ENCODE measurements at regions of chr7 and their contacts with region 1.

Region 1: DNA sequence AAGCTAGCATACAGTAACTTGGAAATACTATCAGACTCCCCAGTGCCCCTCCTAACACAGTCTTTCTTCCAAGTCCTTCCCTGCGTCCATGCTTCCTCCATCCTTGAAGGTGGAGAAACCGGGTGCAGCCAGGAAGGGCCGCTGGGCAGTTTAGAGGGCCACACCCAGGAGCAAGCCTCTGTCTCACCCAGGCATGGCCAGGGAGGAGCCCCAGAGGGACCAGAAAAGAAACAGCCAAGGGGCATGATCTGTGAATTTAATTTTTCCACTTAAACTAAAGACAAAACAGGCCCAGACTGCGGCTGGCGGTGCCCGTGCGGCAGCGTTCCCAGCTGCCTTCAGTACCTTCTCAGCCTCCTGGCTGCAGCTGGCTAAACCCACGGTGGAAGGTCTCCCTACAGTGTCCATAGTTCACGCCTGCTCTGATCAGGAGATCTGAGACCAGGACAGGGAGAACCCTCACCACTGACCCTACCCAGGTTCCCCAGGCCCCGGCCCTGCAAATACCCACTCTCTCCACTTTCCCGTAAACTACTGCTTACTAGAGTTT is 12.9 kb downstream of the UNCX start:
- DNase-seq: no peak
- H3K4me3 Mint-ChIP-seq: no peak overlapping the region
- H3K27ac Mint-ChIP-seq: no peak overlapping the region
- H3K4me1 Mint-ChIP-seq: no peaks in the 10 kb centered on the region
- H3K27me3 Mint-ChIP-seq: peaks cover 62% of the 10 kb centered on the region

Region 2: DNA sequence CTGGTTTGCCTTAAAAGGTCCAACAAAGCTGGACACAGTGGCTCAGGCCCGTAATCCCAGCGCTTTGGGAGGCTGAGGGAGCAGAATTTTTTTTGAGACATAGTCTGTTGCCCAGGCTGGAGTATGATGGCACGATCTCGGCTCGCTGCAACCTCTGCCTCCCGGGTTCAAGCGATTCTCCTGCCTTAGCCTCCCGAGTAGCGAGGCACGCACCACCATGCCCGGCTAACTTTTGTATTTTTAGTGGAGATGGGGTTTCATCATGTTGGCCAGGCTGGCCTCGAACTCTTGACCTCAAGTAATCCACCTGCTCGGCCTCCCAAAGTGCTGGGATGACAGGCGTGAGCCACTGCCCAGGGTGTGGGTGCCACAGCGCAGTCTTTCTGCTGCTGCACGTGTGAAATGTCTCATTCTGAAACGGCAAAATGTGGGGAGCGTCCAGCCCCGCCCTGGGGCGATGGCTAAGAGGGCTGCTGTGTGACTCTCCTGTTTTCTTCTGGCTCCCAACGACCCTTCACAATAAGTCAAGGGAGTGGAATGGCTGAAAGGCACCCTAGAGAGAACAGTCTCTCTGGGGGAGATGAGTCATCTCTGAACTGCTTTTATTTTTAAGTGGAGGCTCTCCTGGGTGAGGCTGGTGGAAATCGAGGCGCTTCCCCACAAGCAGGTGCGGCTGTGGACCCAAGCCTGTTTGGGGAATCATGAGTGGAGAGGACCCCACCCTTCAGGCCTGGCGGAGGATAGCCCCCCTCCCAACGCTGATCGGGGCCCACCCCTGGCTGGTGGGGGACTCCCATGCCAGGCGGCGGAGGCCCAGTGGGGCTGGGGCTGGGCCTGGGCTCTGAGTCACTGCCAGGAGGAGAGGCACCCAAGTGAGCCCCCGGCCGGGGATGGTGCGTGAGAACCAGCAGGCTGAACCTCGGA is 309.2 kb before region 1 on chr7:
- CTCF ChIA-PET with region 1: no interaction called
- POLR2A ChIA-PET with region 1: no interaction called
- DNase-seq: no peak
- H3K4me3 Mint-ChIP-seq: no peak overlapping the region
- H3K27ac Mint-ChIP-seq: peak overlapping the region; percentile 46
- H3K4me1 Mint-ChIP-seq: peaks cover 13% of the 10 kb centered on the region
- H3K27me3 Mint-ChIP-seq: peaks cover 12% of the 10 kb centered on the region

Region 3: DNA sequence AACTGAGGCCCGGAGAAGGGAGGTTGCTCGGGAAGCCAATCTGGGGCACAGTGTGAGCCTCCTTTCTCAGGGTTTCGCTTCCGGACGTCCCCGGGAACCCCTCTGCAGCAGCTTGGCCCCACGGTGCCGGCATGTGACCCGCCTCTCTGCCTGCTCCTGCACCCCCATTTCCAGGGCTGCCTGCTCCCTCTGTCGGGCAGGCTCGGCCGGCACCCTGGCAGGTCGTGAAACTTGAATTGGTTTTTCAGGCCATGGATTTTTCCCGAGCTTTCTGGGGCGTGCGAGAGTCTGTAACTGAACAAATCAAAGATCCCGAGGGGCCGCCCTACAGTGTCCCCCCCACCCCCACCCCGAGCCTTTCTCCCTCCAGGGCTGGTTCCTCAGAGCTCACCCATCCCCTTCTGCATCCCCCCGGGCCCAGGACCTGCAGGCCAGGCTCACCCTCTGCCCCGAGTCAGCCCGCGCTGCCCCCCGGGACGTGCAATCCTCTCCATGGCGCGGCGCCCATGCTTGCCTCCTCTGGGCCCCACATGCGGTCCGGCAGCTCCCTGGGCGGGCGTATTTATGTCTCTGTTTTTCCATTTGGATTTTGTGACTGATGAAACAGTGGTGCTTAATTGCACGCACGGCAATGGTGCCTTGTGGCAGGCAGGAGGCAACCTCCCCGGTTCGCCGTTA is 45.2 kb after region 1 on chr7:
- CTCF ChIA-PET with region 1: no interaction called
- POLR2A ChIA-PET with region 1: no interaction called
- DNase-seq: no peak
- H3K4me3 Mint-ChIP-seq: no peak overlapping the region
- H3K27ac Mint-ChIP-seq: no peak overlapping the region
- H3K4me1 Mint-ChIP-seq: peaks cover 4% of the 10 kb centered on the region
- H3K27me3 Mint-ChIP-seq: peaks cover 20% of the 10 kb centered on the region

Region 4: DNA sequence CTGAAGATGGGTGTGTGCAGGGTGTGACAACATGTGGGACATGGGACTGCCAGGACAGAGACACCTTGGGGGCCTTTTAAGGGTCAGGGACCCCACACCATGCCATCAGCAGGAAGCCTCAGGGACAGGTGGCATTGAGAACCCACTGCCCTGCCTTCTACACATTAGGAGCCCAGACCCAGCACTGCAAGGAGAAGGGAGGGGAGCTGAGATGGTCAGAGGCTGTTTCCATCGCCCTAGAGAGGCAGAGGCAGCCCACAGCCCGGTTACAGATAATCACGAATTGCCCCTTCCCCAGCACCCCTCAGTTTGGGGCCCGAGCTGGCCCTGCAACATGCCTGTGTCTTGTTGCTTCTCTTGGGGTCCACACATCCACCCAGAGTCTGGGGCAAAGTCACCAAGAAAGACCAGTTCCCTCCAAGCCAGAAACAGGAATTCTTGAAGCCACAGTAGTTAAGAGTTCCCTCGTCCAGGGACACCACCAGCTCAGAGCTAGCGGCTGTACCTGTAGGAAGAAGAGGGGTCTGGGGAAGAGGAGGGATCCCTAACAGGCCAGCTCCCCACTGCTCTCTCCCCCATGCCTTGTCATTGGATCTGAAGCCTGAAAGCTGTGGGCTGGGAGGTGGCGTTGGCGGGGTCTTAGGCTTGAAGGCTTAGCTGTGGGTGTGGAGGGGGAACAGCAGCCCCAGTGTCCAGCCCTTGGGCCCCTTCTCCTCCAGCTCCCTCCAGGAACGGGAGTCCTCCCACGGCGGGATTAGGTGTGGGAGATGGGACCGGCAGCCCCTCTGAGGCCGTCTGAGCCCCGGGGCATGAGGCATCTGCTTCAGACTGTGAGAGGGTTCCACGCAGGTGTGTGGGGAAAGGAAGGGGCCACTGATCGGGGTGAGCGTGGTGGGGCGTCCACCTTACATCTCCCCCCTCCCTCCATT is 379.7 kb after region 1 on chr7:
- CTCF ChIA-PET with region 1: no interaction called
- POLR2A ChIA-PET with region 1: interaction called, 11 read pairs
- DNase-seq: no peak
- H3K4me3 Mint-ChIP-seq: no peak overlapping the region
- H3K27ac Mint-ChIP-seq: no peak overlapping the region
- H3K4me1 Mint-ChIP-seq: no peaks in the 10 kb centered on the region
- H3K27me3 Mint-ChIP-seq: no peaks in the 10 kb centered on the region

Measured in activated CD4-positive, alpha-beta T cell treated with anti-CD3 and anti-CD28 coated beads, Interleukin-2, amount 10 ng/mL, durations not matched to agents 7 days and 5 days (primary cell).